HepG2 (cell line): ENCODE measurements at regions of chr3 and their contacts with region 1.

Region 1: DNA sequence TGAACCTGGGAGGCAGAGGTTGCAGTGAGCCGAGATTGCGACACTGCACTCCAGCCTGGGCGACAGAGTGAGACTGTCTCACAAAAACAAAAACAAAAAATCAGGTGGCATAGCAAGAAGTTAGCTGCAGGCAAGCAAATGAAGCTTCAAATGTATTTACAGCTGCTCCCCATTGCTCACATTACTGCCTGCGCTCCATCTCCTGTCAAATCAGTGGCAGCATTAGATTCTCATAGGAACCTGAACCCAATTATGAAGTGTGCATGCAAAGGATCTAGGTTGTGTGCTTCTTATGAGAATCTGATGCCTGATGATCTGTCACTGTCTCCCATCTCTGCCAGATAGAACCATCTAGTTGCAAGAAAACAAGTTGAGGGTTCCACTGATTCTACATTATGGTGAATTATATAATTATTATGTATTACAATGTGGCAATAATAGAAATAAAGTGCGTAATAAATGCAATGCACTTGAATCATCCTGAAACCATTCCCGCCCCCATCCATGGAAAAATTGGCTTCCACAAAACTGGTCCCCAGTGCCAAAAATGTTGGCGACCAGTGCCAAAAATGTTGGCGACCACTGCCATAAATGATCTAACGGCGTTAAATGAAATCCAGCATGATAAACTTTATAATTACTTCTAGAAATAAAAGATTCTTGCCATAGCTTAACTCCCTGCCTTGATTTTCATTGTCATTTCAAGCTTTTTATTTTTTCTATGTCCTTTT is 616.7 kb upstream of the NAALADL2 start:
- DNase-seq: no peak
- ATAC-seq: no peak
- H3K4me3 ChIP-seq: no peak overlapping the region
- H3K27ac ChIP-seq: no peak overlapping the region
- H3K4me1 ChIP-seq: no peaks in the 10 kb centered on the region
- H3K27me3 ChIP-seq: no peaks in the 10 kb centered on the region; a peak in 1 of 5 replicates
- CTCF ChIP-seq: no peak
- EP300 ChIP-seq: no peak
- POLR2A ChIP-seq: no peak
- RAD21 ChIP-seq: no peak

Region 2: DNA sequence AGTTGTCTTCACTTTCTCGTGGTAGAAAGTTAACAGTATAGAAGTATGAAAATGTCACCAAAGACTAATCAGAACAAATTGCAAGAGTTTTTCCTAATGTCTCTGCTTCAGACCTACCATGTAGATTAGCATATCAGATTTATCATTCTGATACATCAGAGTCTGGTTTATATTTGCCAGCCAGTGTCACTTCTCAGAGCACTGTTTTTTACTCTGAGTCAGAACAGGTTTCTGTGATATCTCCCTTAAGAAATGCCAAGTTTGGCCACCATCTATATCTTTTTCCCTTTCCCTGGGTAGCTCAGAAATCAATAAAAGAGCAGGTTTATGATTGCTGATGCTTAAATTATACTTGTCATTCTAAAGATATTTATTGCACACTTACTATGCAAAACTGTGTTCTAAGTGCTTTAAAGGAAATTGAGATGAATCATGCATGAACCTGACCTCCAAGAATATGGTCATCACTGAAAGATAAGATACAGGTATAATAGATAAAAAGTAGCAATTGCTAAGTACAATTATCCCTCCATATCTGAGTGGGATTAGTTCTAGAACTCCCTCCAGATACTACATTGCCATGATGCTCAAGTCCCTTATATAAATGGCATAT is 56.0 kb before region 1 on chr3:
- CTCF ChIA-PET with region 1: no interaction called
- POLR2A ChIA-PET with region 1: no interaction called
- in situ Hi-C with region 1: no loop called
- intact Hi-C with region 1: loop called (anchors 2 kb)
- DNase-seq: no peak
- ATAC-seq: no peak
- H3K4me3 ChIP-seq: no peak overlapping the region
- H3K27ac ChIP-seq: no peak overlapping the region
- H3K4me1 ChIP-seq: no peaks in the 10 kb centered on the region
- H3K27me3 ChIP-seq: no peaks in the 10 kb centered on the region
- CTCF ChIP-seq: no peak
- EP300 ChIP-seq: no peak
- POLR2A ChIP-seq: no peak
- RAD21 ChIP-seq: no peak